ENCODE measurements at regions of chr5 and their contacts with region 1.

Region 1: DNA sequence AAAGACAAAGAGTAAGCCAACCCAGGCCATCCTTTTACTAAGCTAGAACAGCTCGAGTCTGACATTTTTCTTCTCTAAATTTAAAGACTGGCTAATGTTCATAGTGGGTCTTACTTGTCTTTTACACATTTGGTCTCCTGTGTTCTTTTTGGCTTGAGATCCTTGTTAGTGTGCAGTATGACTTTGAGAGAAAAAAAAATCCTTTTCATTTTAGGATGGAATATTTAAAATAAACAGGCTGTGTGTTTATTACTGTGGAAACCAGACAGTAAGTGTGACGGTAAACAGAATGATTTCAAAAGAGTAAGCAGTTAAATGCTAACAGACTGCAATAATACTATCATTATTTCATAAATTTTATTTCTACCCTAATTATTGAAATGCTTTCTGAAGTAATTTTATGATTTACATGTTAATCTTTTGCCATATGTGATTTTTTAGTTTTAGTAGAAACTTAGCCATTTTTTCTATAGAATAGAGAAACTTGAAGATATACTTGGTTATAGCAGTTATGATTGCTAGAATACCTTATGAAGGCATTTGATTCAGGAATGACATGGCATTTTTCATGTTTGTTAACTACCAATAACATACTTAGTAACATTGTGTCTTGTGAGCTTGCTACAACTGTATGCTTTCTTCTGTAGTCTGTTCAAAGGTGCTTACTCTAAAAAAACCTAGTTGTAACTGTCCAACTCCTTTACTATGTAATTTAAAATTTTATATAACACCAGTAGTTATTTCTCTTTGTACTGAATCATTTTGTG is 92.4 kb downstream of the XRCC4 start:
- DNase-seq: no peak
- ATAC-seq: no peak
- H3K4me3 Mint-ChIP-seq: no peak overlapping the region
- H3K27ac Mint-ChIP-seq: no peak overlapping the region
- H3K4me1 Mint-ChIP-seq: peaks cover 2% of the 10 kb centered on the region
- H3K27me3 Mint-ChIP-seq: no peaks in the 10 kb centered on the region
- CTCF ChIP-seq: no peak

Region 2: DNA sequence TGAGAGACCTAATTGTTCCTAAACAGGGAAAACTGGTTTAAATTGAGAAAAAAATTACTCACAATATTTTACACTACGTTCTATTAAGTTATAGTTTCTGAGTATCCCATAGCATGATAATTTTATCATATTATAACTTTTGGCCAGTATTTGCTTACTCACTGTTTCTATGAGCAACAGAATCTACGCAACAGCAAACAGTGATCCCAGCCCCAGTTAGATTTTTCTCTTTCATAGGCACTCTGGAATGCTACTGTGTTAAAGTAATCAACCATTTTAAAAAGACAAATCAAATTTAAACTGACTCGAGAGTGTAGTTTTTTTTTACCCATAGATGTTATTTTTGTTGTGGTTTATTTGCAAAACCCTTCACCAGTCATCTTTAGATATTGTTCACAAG is 14.8 kb after region 1 on chr5:
- CTCF ChIA-PET with region 1: interaction called, 3 read pairs
- POLR2A ChIA-PET with region 1: no interaction called
- intact Hi-C with region 1: loop called (anchors 2 kb)
- DNase-seq: no peak
- ATAC-seq: no peak
- H3K4me3 Mint-ChIP-seq: no peak overlapping the region
- H3K27ac Mint-ChIP-seq: no peak overlapping the region
- H3K4me1 Mint-ChIP-seq: no peaks in the 10 kb centered on the region
- H3K27me3 Mint-ChIP-seq: no peaks in the 10 kb centered on the region
- CTCF ChIP-seq: no peak

Measured in activated CD8-positive, alpha-beta T cell treated with anti-CD3 and anti-CD28 coated beads for 36 hours (primary cell).